Activated CD4-positive, alpha-beta T cell treated with anti-CD3 and anti-CD28 coated beads, Interleukin-2, amount 10 ng/mL, durations not matched to agents 24 days and 14 days (primary cell): ENCODE measurements at regions of chr1 and their contacts with region 1.

Region 1: DNA sequence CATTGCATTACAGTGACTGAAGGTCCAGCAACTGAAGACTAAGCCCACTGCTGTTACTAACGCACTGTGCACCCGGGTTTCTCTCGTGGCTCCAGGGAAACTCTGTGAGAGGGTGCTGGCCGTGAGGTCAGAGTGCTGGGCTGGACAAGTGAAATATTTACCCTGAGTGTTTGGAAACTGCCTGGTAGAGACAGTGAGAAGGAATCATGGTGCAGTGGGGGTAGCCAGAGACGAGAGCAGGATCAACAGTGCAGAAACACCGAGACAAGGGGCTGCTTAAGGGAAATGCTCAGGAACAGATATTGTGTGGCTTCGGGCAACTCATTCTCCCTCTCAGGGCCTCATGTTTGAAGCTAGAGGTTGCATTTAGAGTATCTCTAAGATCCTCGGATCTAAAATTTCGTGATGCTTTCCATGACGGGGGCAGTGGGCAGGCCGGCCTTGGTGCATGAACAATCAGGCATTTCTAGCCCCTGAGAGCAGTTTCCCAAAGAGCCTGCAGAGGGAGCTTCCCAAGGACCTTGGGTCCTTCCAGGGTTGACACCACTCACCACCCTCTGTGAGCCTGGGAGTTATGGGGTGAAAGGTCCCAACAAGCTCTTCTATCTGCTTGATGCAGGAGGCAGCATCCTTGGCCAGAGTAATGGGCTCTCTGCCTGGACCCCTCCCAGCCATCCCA is 9.7 kb downstream of the CD2 start:
- DNase-seq: peak; percentile 86
- H3K4me3 Mint-ChIP-seq: peak overlapping the region; percentile 98
- H3K27ac Mint-ChIP-seq: peak overlapping the region; percentile 99
- H3K4me1 Mint-ChIP-seq: peaks cover 85% of the 10 kb centered on the region
- H3K27me3 Mint-ChIP-seq: no peaks in the 10 kb centered on the region

Region 2: DNA sequence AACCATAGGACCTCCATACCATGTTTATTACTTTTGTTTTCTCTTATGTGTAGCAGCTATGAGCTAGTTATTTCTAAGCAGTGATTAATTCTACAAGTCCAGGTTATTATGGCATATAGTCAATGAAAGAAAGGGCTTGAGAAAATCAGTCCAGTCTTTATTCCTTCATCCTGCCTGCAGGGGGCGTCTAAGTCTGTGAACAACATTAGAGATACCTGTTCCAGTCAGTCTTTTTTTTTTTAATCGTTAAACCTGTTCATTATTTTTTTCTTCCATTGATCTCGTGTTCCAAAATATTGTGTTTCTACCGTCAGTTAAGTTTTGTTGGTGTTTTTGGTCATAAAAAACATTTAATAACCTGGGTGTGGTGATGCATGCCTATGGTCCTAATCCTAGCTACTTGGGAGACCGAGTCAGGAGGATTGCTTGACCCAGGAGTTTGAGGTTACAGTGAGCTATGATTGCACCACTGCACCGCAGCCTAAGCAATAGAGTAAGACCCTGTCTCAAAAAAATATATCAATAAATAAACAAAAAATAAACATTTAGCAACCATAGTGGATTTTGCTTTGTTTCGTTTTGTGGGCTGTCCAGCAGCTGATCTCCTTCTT is 39.1 kb before region 1 on chr1:
- intact Hi-C with region 1: loop called (anchors 1 kb)
- DNase-seq: peak; percentile 92
- H3K4me3 Mint-ChIP-seq: no peak overlapping the region
- H3K27ac Mint-ChIP-seq: no peak overlapping the region
- H3K4me1 Mint-ChIP-seq: peaks cover 30% of the 10 kb centered on the region
- H3K27me3 Mint-ChIP-seq: no peaks in the 10 kb centered on the region

Region 3: DNA sequence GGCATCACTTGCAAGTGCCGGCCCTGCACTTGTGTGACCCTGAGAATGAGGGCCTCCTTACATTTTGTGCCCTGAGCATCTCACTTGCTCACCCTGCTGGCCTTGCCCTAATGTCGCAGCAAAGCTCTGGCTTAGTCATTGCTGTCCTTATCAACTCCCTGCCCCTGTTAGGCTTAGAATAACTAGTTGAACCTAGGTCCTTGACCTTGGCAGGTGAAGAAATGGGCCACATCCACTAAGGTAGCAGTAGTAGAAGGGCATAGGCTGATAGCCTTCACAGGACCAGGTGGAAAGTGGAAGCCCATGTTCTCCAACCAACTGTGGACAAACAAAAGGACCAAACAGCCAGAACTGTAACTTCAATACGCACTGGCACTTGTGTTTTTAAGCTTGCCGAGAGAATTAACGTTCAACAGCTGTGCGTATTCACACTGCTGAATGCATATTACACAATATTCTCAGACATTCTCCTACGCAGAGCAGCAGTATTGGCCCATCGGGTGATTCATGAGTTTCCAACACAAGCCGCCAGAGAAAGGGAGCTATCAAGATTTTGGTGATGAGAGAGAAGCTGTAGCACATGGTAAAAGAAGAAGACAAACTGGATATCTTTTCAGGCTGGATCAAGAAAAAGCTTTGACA is 118.1 kb after region 1 on chr1:
- intact Hi-C with region 1: loop called (anchors 1 kb)
- DNase-seq: peak; percentile 82
- H3K4me3 Mint-ChIP-seq: no peak overlapping the region
- H3K27ac Mint-ChIP-seq: no peak overlapping the region
- H3K4me1 Mint-ChIP-seq: peaks cover 28% of the 10 kb centered on the region
- H3K27me3 Mint-ChIP-seq: no peaks in the 10 kb centered on the region

Region 4: DNA sequence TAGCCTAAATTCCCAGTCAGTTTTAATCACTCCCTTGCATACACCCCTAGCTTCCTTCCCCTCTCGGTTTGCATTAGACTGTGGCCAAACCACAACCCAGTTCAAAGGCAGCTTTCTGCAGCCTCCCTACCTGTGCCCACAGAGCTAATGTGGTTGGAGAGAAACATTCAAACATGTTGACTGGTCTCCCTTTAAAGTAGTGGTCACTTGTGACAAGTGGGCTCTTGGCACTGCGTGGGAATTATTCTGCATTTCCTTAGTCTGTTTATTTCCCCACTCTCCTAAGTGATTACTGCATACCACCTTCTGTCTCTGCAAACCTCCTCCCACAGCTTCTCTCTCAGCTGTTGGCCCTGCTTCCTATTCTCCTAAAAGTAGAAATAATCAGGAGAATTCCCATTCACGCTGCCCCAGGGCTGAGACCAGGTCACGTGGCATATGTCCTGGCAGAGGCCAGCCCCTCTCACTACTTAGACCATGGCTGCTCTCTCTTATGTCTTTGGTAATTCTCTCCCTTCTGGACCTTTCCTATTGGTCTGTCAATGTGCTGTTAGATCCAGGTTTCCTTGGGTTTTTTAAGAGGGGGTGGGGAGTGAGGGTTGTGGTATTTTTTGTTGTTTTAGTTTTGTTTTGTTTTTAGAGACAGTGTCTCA is 199.2 kb after region 1 on chr1:
- intact Hi-C with region 1: no loop called
- DNase-seq: peak; percentile 70
- H3K4me3 Mint-ChIP-seq: no peak overlapping the region
- H3K27ac Mint-ChIP-seq: no peak overlapping the region
- H3K4me1 Mint-ChIP-seq: no peaks in the 10 kb centered on the region
- H3K27me3 Mint-ChIP-seq: no peaks in the 10 kb centered on the region

Region 5: DNA sequence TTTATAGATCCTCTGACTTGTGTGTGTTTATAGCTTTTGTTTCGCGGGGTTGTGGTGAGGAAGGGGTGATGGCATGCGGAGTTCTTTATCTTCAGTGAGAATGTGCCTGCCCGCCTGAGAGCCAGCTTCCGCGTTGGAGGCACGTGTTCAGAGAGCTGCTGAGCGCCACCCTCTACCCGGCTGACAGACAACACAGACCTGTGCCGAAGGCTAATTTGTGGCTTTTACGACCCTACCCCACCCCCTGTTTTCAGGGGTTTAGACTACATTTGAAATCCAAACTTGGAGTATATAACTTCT is 223.3 kb after region 1 on chr1:
- intact Hi-C with region 1: loop called (anchors 2 kb)
- DNase-seq: peak; percentile 89
- H3K4me3 Mint-ChIP-seq: peak overlapping the region; percentile 89
- H3K27ac Mint-ChIP-seq: peak overlapping the region; percentile 98
- H3K4me1 Mint-ChIP-seq: peaks cover 35% of the 10 kb centered on the region
- H3K27me3 Mint-ChIP-seq: no peaks in the 10 kb centered on the region